PC-9 (cell line): ENCODE measurements at regions of chr22 and their contacts with region 1.

Region 1: DNA sequence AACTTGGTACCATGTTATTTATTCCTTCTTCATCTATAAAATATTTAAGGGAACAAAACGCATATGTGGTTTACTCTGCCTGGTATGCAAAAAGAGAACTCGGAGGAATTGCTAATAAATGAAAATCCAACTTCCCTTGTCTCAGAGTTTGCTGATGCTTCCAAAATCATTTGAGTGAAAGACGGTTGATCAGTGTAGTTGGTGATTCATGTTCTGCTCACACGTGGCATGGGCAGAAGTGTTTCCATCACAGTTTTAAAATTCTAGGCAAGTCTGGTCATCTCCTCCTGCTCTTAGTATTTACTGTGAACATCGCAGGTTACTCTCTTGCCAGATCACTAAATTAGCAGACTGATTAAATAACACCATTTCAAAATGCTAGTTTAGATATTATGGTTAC is 11.9 kb upstream of the PARVB start:
- DNase-seq: peak in 1 of 2 experiments; percentile 19
- H3K4me3 ChIP-seq: no peak overlapping the region
- H3K27ac ChIP-seq: no peak overlapping the region
- H3K4me1 ChIP-seq: no peaks in the 10 kb centered on the region
- H3K27me3 ChIP-seq: no peaks in the 10 kb centered on the region
- CTCF ChIP-seq: no peak

Region 2: GRCh38 chr22:44033694-44034093 is 21.5 kb after region 1 on chr22:
- CTCF ChIA-PET with region 1: no interaction called
- POLR2A ChIA-PET with region 1: interaction called, 17 read pairs
- intact Hi-C with region 1: no loop called
- DNase-seq: no peak
- H3K4me3 ChIP-seq: no peak overlapping the region
- H3K27ac ChIP-seq: no peak overlapping the region
- H3K4me1 ChIP-seq: peaks cover 13% of the 10 kb centered on the region
- H3K27me3 ChIP-seq: no peaks in the 10 kb centered on the region
- CTCF ChIP-seq: no peak

Region 3: GRCh38 chr22:44074337-44074984 is 62.3 kb after region 1 on chr22:
- CTCF ChIA-PET with region 1: no interaction called
- POLR2A ChIA-PET with region 1: no interaction called
- intact Hi-C with region 1: no loop called
- DNase-seq: no peak
- H3K4me3 ChIP-seq: no peak overlapping the region
- H3K27ac ChIP-seq: no peak overlapping the region
- H3K4me1 ChIP-seq: no peaks in the 10 kb centered on the region
- H3K27me3 ChIP-seq: no peaks in the 10 kb centered on the region
- CTCF ChIP-seq: no peak

Region 4: DNA sequence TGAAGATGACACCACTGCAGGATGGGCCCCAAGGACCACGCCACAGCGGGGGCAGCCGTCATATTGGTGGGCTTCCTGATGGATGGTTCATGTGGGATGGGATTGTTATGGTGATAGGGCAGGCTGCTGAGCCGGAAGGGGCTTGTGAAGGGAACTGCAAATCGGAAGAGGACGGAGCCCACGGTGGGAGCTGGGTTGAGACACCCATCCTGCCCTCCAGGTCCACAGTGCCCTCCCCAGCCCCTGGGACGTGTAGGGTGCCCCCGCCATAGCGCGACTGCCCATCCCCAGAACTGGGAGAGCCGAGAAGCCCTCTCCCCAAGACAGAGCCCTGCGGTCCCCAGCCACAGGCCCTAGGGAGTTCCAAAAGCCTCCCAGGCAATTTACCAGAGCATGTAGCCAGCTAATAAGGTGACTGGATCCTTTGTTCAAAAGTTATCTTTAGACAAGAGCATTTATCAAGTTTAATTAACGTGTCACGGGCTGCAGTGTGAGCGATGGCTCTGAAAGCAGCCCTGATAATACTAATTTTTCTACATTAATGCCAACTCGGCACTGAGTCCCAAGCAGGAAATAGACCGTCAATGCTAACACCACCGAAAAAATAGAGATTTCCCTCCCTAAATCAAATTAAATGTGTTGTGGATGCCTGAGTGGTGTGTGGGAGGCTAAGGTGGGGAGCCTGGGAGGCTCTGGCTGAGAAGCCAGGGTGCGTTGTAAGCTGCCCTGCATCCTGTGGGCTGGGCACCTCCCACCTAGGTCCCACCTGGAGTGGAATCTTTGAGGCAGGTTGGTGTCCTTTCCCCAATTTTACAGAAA is 562.6 kb after region 1 on chr22:
- CTCF ChIA-PET with region 1: no interaction called
- POLR2A ChIA-PET with region 1: interaction called, 11 read pairs
- intact Hi-C with region 1: no loop called
- DNase-seq: no peak
- H3K4me3 ChIP-seq: no peak overlapping the region
- H3K27ac ChIP-seq: no peak overlapping the region
- H3K4me1 ChIP-seq: peaks cover 5% of the 10 kb centered on the region
- H3K27me3 ChIP-seq: no peaks in the 10 kb centered on the region; the same call in 1 of the 2 replicates
- CTCF ChIP-seq: no peak